Vagina (tissue), 2 donors: ENCODE measurements at regions of chr17 and their contacts with region 1.

Region 1: GRCh38 chr17:63600569-63601438 is at the start of gene TACO1:
- DNase-seq: no peak
- H3K4me3 ChIP-seq: peak within 1 kb of the TSS; percentile 66 to 71
- H3K27ac ChIP-seq: peak within 1 kb of the TSS; percentile 76
- H3K4me1 ChIP-seq: peaks cover 21% of the 10 kb centered on the region
- H3K27me3 ChIP-seq: no peaks in the 10 kb centered on the region
- CTCF ChIP-seq: no peak
- POLR2A ChIP-seq: no peak
- total RNA-seq, gene TACO1: 20.9 TPM

Region 2: DNA sequence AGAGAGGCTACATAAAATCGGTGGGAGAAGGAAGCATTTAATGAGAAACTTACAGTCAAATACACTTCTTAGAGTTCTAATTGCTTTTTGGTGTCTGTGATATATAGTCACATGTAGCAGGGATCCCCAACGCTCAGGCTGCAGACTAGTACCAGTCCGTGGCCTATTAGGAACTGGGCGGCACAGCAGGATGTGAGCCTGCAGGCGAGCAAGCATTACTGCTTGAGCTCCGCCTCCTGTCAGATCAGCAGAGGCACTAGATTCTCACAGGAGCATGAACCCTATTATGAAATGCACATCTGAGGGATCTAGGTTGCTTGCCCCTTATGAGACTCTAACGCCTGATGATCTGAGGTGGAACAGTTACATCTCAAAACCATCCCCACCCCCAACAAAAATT is 476.3 kb before region 1 on chr17:
- intact Hi-C with region 1: no loop called
- DNase-seq: no peak
- H3K4me3 ChIP-seq: no peak overlapping the region
- H3K27ac ChIP-seq: no peak overlapping the region
- H3K4me1 ChIP-seq: no peaks in the 10 kb centered on the region
- H3K27me3 ChIP-seq: no peaks in the 10 kb centered on the region
- CTCF ChIP-seq: no peak
- POLR2A ChIP-seq: no peak

Region 3: GRCh38 chr17:63434876-63435684 is 165.7 kb before region 1 on chr17:
- intact Hi-C with region 1: loop called (anchors 5 kb)
- DNase-seq: no peak
- H3K4me3 ChIP-seq: no peak overlapping the region
- H3K27ac ChIP-seq: peak overlapping the region; percentile 69
- H3K4me1 ChIP-seq: peaks cover 82% of the 10 kb centered on the region
- H3K27me3 ChIP-seq: no peaks in the 10 kb centered on the region
- CTCF ChIP-seq: no peak
- POLR2A ChIP-seq: no peak

Region 4: DNA sequence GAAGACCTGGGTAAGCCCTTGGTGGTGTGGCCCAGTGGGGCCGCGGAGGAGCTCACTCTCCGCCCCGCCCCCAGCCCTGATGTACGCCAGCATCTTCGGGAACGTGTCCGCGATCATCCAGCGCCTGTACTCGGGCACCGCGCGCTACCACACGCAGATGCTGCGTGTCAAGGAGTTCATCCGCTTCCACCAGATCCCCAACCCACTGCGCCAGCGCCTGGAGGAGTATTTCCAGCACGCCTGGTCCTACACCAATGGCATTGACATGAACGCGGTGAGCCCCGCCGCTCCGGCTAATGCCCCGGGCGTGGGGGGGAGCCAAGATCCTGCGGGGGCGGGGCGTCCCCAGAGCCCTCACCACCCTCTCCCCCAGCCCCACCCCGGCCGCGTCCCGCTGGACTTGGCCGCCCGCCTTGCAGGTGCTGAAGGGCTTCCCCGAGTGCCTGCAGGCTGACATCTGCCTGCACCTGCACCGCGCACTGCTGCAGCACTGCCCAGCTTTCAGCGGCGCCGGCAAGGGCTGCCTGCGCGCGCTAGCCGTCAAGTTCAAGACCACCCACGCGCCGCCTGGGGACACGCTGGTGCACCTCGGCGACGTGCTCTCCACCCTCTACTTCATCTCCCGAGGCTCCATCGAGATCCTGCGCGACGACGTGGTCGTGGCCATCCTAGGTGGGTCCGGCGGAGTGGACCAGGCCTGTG is 62.7 kb before region 1 on chr17:
- intact Hi-C with region 1: loop called (anchors 10 kb)
- DNase-seq: no peak
- H3K4me3 ChIP-seq: peak overlapping the region in 1 of 2 donors; percentile 4
- H3K27ac ChIP-seq: no peak overlapping the region
- H3K4me1 ChIP-seq: peaks cover 11% of the 10 kb centered on the region
- H3K27me3 ChIP-seq: peaks cover 6% of the 10 kb centered on the region
- CTCF ChIP-seq: no peak
- POLR2A ChIP-seq: no peak

Region 5: DNA sequence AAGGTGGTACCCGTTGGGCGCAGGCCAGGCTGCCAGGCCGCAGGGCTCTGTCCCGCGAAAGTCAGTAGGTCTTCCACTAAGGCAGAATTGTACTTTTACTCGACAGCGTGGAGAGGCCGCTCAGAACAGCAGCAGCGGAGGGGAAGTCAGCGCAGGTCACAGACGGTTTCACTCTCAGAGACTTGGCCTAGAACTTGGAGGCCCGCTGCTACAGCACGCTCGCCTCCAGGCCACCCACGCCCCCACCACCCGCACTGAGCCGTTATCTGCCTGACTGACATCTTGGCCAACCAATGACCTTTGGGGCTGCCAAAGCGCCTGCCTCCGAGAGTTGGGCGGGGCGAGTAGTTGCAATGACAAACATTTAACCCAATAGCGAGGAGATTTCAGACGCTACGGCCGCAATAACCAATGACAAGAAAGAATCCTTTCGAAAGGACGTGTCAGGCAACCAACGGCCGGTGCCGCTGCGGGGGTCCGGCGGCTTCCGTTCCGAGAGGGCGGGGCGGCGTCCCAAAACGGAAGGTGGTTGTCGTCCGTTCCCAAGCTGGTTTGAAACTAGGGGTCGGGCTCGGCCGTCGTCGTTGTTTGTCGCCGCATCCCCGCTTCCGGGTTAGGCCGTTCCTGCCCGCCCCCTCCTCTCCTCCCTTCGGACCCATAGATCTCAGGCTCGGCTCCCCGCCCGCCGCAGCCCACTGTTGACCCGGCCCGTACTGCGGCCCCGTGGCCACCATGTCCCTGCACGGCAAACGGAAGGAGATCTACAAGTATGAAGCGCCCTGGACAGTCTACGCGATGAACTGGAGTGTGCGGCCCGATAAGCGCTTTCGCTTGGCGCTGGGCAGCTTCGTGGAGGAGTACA is 50.6 kb before region 1 on chr17 and contains the start of gene DCAF7:
- intact Hi-C with region 1: loop called (anchors 10 kb)
- DNase-seq: peak; percentile 99
- H3K4me3 ChIP-seq: peak within 1 kb of the TSS; percentile 73 to 100
- H3K27ac ChIP-seq: peak within 1 kb of the TSS; percentile 90
- H3K4me1 ChIP-seq: peaks cover 51% of the 10 kb centered on the region
- H3K27me3 ChIP-seq: no peaks in the 10 kb centered on the region
- CTCF ChIP-seq: no peak
- POLR2A ChIP-seq: peak in 1 of 2 donors; percentile 37
- total RNA-seq, gene DCAF7: 34.1 TPM